Kidney (tissue), 22 donors: ENCODE measurements at regions of chr7 and their contacts with region 1.

Region 1: DNA sequence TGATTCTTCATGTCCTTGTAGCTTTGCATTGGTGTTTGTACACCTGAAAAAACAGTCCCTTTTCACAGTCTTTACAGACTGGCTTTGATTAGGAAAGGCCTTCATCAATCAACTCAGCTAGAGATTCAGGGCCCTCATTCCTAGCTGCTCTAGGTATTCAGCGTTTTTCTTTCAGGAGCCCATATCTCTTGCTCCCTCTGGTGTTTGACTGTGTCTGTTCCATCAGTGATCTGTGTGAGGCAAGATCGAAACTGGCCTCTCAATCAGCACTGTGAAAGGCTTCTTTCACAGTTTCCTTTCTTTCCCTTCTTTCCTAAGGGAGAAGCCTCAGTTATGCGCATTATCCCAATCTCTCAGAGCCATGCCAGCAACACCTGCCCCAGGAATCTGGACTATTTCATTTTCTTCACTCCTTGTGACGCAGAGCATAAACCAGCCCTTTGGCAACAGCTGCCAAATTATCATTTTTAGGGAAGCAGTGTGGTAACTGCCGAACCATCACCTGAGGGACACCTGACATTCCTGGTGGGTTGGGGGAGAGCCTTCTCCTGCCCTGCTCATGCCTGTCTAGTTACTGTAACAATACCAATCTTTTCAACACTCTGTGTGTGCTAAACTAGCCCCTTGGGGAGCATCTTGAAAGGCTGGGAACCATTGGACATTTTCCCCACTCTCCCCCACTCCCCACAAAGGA is 75.7 kb upstream of the CCDC71L start:
- DNase-seq: peak in 3 of 5 donors; percentile 12 to 39 (median 29)
- H3K4me3 ChIP-seq: no peak overlapping the region
- H3K27ac ChIP-seq: peak overlapping the region in 1 of 2 donors; percentile 5
- H3K4me1 ChIP-seq: peaks cover 0 to 3% (median 0%) of the 10 kb centered on the region in 3 donors
- H3K27me3 ChIP-seq: no peaks in the 10 kb centered on the region
- CTCF ChIP-seq: peak; percentile 78

Region 2: GRCh38 chr7:106176414-106177299 is 560.0 kb before region 1 on chr7:
- intact Hi-C with region 1: loop called (anchors 10 kb)
- DNase-seq: peak; percentile 87 to 93 (median 90)
- H3K4me3 ChIP-seq: no peak overlapping the region
- H3K27ac ChIP-seq: no peak overlapping the region
- H3K4me1 ChIP-seq: no peaks in the 10 kb centered on the region
- H3K27me3 ChIP-seq: no peaks in the 10 kb centered on the region
- CTCF ChIP-seq: peak; percentile 95

Region 3: GRCh38 chr7:106461993-106462859 is 274.4 kb before region 1 on chr7:
- intact Hi-C with region 1: no loop called
- DNase-seq: peak in 2 of 5 donors; percentile 34 to 47
- H3K4me3 ChIP-seq: no peak overlapping the region
- H3K27ac ChIP-seq: no peak overlapping the region
- H3K4me1 ChIP-seq: peaks cover 0 to 13% (median 9%) of the 10 kb centered on the region in 3 donors
- H3K27me3 ChIP-seq: no peaks in the 10 kb centered on the region
- CTCF ChIP-seq: peak; percentile 49

Region 4: DNA sequence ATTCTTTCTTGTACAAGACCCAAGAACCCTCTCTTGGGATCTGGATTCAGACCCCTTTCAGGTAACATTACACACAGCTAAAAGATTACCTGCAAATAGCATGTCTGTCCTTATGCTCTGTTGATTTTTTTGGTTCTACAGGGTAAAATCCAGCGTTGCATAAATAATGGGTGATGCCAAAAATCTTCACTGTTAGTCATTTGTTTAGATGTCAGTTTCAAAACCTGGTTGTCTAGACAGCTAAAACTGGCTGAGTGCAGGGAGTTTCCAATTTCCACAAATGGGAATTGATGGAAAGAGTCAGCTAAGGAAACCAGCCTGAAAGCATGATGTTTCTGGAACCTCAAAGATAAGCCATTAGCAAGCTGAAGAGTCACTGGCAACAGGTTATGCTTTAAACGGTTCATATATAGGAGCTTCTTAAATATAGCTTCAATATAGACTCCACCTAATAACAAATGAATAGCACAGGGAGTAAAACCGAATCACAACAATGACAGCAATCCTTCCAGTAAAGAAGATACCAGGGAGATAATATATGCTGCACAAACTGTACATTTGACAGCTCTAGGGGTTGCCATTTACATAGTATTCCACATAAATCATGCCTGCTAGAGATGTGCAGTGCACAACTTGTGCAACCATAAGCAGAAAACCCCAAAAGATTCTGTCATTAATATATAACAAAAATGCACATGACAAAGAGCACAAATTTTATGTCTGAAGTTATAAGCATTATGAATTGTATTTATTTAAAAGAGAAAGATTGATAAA is 96.1 kb before region 1 on chr7:
- intact Hi-C with region 1: no loop called
- DNase-seq: no peak
- H3K4me3 ChIP-seq: no peak overlapping the region
- H3K27ac ChIP-seq: no peak overlapping the region
- H3K4me1 ChIP-seq: no peaks in the 10 kb centered on the region
- H3K27me3 ChIP-seq: no peaks in the 10 kb centered on the region
- CTCF ChIP-seq: no peak

Region 5: GRCh38 chr7:106659963-106660861 is 76.4 kb before region 1 on chr7:
- intact Hi-C with region 1: loop called (anchors 10 kb)
- DNase-seq: peak; percentile 80 to 92 (median 88)
- H3K4me3 ChIP-seq: peak overlapping the region; percentile 60 to 89 (median 62)
- H3K27ac ChIP-seq: peak overlapping the region; percentile 78 to 93
- H3K4me1 ChIP-seq: peaks cover 0 to 7% (median 3%) of the 10 kb centered on the region in 3 donors
- H3K27me3 ChIP-seq: no peaks in the 10 kb centered on the region
- CTCF ChIP-seq: peak; percentile 60